HepG2 (cell line): ENCODE measurements at regions of chr14 and their contacts with region 1.

Region 1: GRCh38 chr14:65958664-65959562 is 527.3 kb upstream of the CCDC196 start:
- DNase-seq: peak; percentile 16
- ATAC-seq: peak; percentile 68
- H3K4me3 ChIP-seq: no peak overlapping the region
- H3K27ac ChIP-seq: no peak overlapping the region
- H3K4me1 ChIP-seq: no peaks in the 10 kb centered on the region
- H3K27me3 ChIP-seq: peaks cover 0 to 1% of the 10 kb centered on the region in 2 experiments; a peak in 2 of 5 replicates
- CTCF ChIP-seq: peak; percentile 62
- EP300 ChIP-seq: no peak
- POLR2A ChIP-seq: no peak
- RAD21 ChIP-seq: no peak

Region 2: GRCh38 chr14:65164068-65164824 is 794.7 kb before region 1 on chr14:
- CTCF ChIA-PET with region 1: interaction called, 21 read pairs
- POLR2A ChIA-PET with region 1: no interaction called
- in situ Hi-C with region 1: loop called (anchors 5 kb)
- intact Hi-C with region 1: loop called (anchors 1 kb)
- DNase-seq: peak; percentile 43
- ATAC-seq: peak; percentile 80
- H3K4me3 ChIP-seq: no peak overlapping the region
- H3K27ac ChIP-seq: no peak overlapping the region
- H3K4me1 ChIP-seq: peaks cover 11% of the 10 kb centered on the region
- H3K27me3 ChIP-seq: no peaks in the 10 kb centered on the region
- CTCF ChIP-seq: peak; percentile 68
- EP300 ChIP-seq: no peak
- POLR2A ChIP-seq: no peak
- RAD21 ChIP-seq: peak; percentile 71

Region 3: GRCh38 chr14:65169351-65169750 is 789.6 kb before region 1 on chr14:
- CTCF ChIA-PET with region 1: interaction called, 21 read pairs
- POLR2A ChIA-PET with region 1: no interaction called
- in situ Hi-C with region 1: loop called (anchors 5 kb)
- intact Hi-C with region 1: loop called (anchors 1 kb)
- DNase-seq: no peak
- ATAC-seq: no peak
- H3K4me3 ChIP-seq: no peak overlapping the region
- H3K27ac ChIP-seq: no peak overlapping the region
- H3K4me1 ChIP-seq: peaks cover 32% of the 10 kb centered on the region
- H3K27me3 ChIP-seq: 0 out of 5 replicates have a peak, but pooled peaks cover 0 to 8% of the 10 kb centered on the region in 2 experiments
- CTCF ChIP-seq: no peak
- EP300 ChIP-seq: no peak
- POLR2A ChIP-seq: no peak
- RAD21 ChIP-seq: no peak

Region 4: GRCh38 chr14:66070509-66071319 is 111.8 kb after region 1 on chr14:
- CTCF ChIA-PET with region 1: no interaction called
- POLR2A ChIA-PET with region 1: no interaction called
- in situ Hi-C with region 1: no loop called
- intact Hi-C with region 1: loop called (anchors 5 kb)
- DNase-seq: peak; percentile 18
- ATAC-seq: peak; percentile 94
- H3K4me3 ChIP-seq: no peak overlapping the region
- H3K27ac ChIP-seq: no peak overlapping the region
- H3K4me1 ChIP-seq: no peaks in the 10 kb centered on the region
- H3K27me3 ChIP-seq: peaks cover 0 to 34% of the 10 kb centered on the region in 2 experiments; a peak in 3 of 5 replicates
- CTCF ChIP-seq: peak; percentile 80
- EP300 ChIP-seq: no peak
- POLR2A ChIP-seq: no peak
- RAD21 ChIP-seq: peak; percentile 47; the same call in 1 of the 2 replicates